CD14-positive monocyte (primary cell): ENCODE measurements at regions of chr6 and their contacts with region 1.

Region 1: GRCh38 chr6:24689964-24690363 is 23.1 kb downstream of the ACOT13 start:
- DNase-seq: no peak
- H3K4me3 ChIP-seq: no peak overlapping the region
- H3K4me3 Mint-ChIP-seq: no peak overlapping the region
- H3K27ac ChIP-seq: no peak overlapping the region
- H3K27ac Mint-ChIP-seq: no peak overlapping the region
- H3K4me1 ChIP-seq: peaks cover 6 to 9% of the 10 kb centered on the region in 2 donors
- H3K4me1 Mint-ChIP-seq: peaks cover 11% of the 10 kb centered on the region
- H3K27me3 ChIP-seq: no peaks in the 10 kb centered on the region
- H3K27me3 Mint-ChIP-seq: peaks cover 0 to 3% (median 0%) of the 10 kb centered on the region in 3 donors
- CTCF ChIP-seq: no peak

Region 2: GRCh38 chr6:24408719-24409410 is 281.1 kb before region 1 on chr6:
- intact Hi-C with region 1: no loop called
- DNase-seq: no peak
- H3K4me3 ChIP-seq: no peak overlapping the region
- H3K4me3 Mint-ChIP-seq: no peak overlapping the region
- H3K27ac ChIP-seq: no peak overlapping the region
- H3K27ac Mint-ChIP-seq: peak overlapping the region in 1 of 7 donors; percentile 23
- H3K4me1 ChIP-seq: peaks cover 4 to 8% of the 10 kb centered on the region in 2 donors
- H3K4me1 Mint-ChIP-seq: peaks cover 9% of the 10 kb centered on the region
- H3K27me3 ChIP-seq: no peaks in the 10 kb centered on the region
- H3K27me3 Mint-ChIP-seq: peaks cover 0 to 2% (median 0%) of the 10 kb centered on the region in 3 donors
- CTCF ChIP-seq: no peak

Region 3: GRCh38 chr6:24431045-24431451 is 258.9 kb before region 1 on chr6:
- intact Hi-C with region 1: loop called in 1 of 2 experiments (anchors 10 kb)
- DNase-seq: peak; percentile 28 to 45 (median 45)
- H3K4me3 ChIP-seq: no peak overlapping the region
- H3K4me3 Mint-ChIP-seq: no peak overlapping the region
- H3K27ac ChIP-seq: no peak overlapping the region
- H3K27ac Mint-ChIP-seq: no peak overlapping the region
- H3K4me1 ChIP-seq: peaks cover 10 to 11% of the 10 kb centered on the region in 2 donors
- H3K4me1 Mint-ChIP-seq: peaks cover 18% of the 10 kb centered on the region
- H3K27me3 ChIP-seq: no peaks in the 10 kb centered on the region
- H3K27me3 Mint-ChIP-seq: peaks cover 0 to 2% (median 0%) of the 10 kb centered on the region in 3 donors
- CTCF ChIP-seq: peak; percentile 84

Region 4: GRCh38 chr6:24723258-24723657 is 33.3 kb after region 1 on chr6:
- intact Hi-C with region 1: no loop called
- DNase-seq: no peak
- H3K4me3 ChIP-seq: no peak overlapping the region
- H3K4me3 Mint-ChIP-seq: no peak overlapping the region
- H3K27ac ChIP-seq: no peak overlapping the region
- H3K27ac Mint-ChIP-seq: no peak overlapping the region
- H3K4me1 ChIP-seq: peaks cover 15 to 17% of the 10 kb centered on the region in 2 donors
- H3K4me1 Mint-ChIP-seq: peaks cover 10% of the 10 kb centered on the region
- H3K27me3 ChIP-seq: no peaks in the 10 kb centered on the region
- H3K27me3 Mint-ChIP-seq: peaks cover 1 to 2% (median 1%) of the 10 kb centered on the region in 3 donors
- CTCF ChIP-seq: no peak